ENCODE measurements at regions of chr2 and their contacts with region 1.

Region 1: DNA sequence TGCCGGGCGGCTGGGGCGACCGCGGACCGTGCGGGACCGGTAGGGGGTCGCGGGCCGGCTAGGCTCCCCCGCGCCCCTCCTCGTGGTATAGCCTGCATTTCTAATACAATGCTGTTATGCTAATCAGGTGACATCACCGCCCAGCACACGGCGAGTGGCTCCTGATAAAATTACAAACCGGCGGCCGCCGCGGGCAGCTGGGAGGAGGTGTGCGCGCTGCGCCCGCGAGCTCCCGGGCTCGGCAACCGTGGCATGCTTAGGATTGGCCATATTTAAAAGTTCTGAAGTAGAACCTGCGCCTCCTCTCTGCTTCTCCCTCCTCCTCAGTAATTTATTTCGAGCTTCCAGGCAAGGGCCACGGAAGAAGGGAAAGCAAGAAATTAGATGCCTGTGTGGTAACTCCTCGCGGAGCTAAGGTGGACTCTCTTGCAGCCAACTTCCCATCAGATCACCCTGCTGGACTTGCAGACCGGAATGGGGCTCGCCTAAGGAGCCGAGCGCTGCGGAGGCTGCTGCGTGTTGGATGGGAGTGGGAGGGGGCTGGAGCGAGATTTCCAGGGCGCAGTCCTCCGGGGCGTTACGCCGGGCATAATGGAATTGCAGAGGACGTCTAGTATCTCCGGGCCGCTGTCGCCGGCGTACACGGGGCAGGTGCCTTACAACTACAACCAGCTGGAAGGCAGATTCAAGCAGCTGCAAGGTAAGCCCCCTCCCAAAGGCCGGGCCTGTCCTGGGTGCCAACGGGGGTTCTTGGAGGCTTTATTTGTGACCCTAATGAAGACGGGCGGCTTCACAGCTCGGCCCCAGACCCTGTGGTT is 102.3 kb downstream of the SPTBN1 start:
- DNase-seq: peak; percentile 72
- H3K4me3 Mint-ChIP-seq: peak overlapping the region; percentile 84
- H3K27ac Mint-ChIP-seq: peak overlapping the region; percentile 93
- H3K4me1 Mint-ChIP-seq: peaks cover 36% of the 10 kb centered on the region
- H3K27me3 Mint-ChIP-seq: no peaks in the 10 kb centered on the region
- CTCF ChIP-seq: no peak

Region 2: DNA sequence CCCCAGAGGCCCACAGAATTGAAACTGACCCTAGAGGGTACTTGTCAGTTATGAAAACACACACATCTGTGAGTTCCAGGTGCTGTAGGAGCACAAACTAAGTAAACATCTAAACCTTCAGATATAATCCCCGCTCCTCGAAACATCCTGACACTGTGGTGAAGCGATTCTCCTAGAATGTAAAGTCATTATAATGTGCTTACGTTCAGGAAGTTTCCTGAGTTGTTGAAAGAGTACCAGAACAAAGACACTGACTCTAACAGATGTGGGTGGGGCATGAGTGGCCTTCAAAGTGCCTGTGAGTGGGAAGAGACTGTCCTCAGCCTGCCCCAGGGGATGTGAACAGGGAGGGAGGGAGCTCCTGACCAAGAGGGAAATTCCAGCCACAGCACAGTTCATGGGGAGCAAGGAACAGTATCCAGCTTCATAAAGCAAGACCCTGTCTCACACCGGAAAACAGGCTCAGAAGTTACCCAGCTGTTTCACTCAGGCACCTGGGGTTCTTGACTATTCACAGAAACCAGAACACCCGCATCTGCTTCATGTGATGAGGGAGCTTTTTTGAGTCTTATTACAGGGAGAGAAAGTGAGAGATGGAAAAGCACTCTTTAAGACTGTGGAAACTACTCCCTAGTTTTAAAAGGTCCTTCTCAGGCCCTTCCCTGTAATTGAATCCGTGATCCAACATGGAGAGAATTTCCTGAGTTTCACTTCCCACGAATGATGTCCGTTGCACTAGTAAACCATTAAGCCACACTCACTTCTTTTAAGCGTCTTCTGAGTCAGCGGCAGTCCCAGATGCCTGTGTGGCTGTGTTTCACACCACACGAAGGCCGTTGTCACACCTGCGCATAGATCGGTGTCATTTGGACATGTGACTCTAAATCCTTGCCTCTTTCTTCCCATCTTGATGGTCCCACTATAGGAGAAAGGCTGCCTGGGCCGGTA is 76.4 kb after region 1 on chr2:
- CTCF ChIA-PET with region 1: no interaction called
- intact Hi-C with region 1: loop called (anchors 5 kb)
- DNase-seq: peak; percentile 49
- H3K4me3 Mint-ChIP-seq: peak overlapping the region; percentile 34
- H3K27ac Mint-ChIP-seq: peak overlapping the region; percentile 83
- H3K4me1 Mint-ChIP-seq: peaks cover 76% of the 10 kb centered on the region
- H3K27me3 Mint-ChIP-seq: no peaks in the 10 kb centered on the region
- CTCF ChIP-seq: no peak

Measured in Calu3 (cell line).